PC-3 (cell line): ENCODE measurements at regions of chr14 and their contacts with region 1.

Region 1: DNA sequence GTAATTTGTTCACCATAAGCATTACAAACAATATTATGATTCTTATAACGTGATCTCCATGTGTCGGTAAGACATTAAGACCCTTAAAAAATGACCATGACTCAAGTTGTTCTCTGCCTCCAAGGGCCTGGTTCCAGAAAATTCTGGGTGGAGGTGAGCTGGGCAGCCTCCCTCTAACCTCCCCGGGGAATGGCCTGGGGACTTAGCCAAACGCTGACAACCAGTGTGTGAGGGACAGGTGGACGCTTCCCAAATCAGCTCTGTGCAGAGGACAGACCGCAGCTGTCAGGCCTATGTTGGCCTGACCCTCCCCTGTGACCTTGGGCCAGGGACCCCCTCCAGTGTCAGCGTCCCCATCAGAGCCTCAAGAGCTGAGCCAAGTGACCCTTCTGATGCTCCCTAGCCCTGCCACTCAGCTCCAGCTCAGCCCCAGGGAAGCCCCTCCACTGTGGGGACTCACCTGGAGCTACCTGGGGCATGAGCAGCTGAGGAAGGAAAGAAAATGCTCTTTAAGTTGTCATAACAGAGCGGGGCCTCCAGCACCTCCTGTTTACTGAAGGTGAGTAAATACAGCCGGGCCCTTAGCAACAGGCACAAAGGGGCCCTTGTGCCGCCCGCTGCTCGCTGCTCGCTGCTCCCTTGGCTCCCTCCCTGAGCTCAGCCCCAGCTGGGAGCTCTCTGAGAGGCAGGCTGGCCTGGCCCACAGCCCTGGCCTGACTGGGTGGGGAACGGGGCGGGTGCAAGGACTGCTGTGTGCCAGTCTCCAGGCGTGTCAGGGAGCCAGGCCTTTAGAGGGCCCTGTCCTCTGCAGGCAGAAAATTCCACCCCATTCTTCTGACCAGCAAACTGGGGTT is 116.6 kb downstream of the CALM1 start:
- DNase-seq: peak; percentile 90
- ATAC-seq: peak; percentile 91
- H3K4me3 ChIP-seq: peak overlapping the region; percentile 13; the same call in 1 of the 2 replicates
- H3K27ac ChIP-seq: peak overlapping the region; percentile 90
- H3K4me1 ChIP-seq: peaks cover 46% of the 10 kb centered on the region
- H3K27me3 ChIP-seq: 0 out of 2 replicates have a peak, but pooled peaks cover 4% of the 10 kb centered on the region
- CTCF ChIP-seq: no peak

Region 2: DNA sequence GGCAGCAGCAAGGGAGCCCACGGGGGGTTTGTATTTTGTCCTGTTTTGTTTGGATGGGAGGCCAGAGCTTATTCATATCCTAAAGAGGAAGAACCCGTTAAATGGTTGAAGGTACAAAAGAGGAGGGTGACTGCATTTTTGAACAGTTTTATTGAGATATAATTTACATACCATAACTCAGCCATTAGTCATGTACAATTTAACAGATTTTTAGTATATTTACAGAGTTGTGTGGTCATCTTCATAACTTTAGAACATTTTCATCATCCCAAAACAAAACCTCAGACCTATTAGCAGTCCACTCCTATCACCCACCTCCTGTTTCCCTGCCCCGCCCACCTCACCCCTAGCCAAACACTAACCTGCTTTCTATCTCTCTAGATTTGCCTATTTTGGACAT is 194.2 kb before region 1 on chr14:
- CTCF ChIA-PET with region 1: no interaction called
- POLR2A ChIA-PET with region 1: interaction called, 14 read pairs
- intact Hi-C with region 1: no loop called
- DNase-seq: peak; percentile 45
- ATAC-seq: peak; percentile 90
- H3K4me3 ChIP-seq: no peak overlapping the region
- H3K27ac ChIP-seq: peak overlapping the region; percentile 37
- H3K4me1 ChIP-seq: peaks cover 14% of the 10 kb centered on the region
- H3K27me3 ChIP-seq: no peaks in the 10 kb centered on the region
- CTCF ChIP-seq: no peak

Region 3: DNA sequence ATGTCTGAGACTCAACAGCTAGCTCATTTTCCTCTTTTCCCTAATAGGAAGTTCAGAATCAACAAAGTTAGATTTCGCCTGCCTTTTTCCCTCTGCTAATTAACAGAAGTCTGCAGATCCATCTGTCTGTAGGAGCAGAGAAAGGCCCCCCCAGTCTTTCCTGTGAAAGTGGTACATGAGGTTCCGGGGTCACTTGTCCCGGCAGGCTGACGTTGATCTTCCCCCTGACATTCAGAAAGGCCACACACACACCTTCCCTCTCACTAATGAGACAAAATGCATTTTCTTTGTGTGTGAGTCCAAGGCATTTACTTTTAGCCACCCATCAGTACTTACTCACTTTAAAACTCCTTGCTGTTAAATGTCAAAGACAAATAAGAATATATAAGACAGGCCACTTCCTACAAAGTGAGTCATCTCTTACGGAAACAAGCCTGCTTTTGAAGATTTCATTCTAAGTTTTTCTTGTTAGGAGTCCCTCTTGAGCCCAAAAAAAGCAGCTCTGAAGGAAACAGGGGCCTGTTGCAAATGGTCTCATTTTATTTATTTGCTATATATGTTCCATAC is 164.2 kb after region 1 on chr14:
- CTCF ChIA-PET with region 1: no interaction called
- POLR2A ChIA-PET with region 1: no interaction called
- intact Hi-C with region 1: loop called (anchors 5 kb)
- DNase-seq: peak; percentile 79
- ATAC-seq: peak; percentile 98
- H3K4me3 ChIP-seq: no peak overlapping the region
- H3K27ac ChIP-seq: peak overlapping the region; percentile 62
- H3K4me1 ChIP-seq: peaks cover 20% of the 10 kb centered on the region
- H3K27me3 ChIP-seq: no peaks in the 10 kb centered on the region
- CTCF ChIP-seq: no peak